ENCODE measurements at regions of chr1 and their contacts with region 1.

Region 1: GRCh38 chr1:150829743-150830142 is 21.7 kb upstream of the CTSK start:
- DNase-seq: no peak
- H3K4me3 ChIP-seq: no peak overlapping the region
- H3K27ac ChIP-seq: no peak overlapping the region
- H3K4me1 ChIP-seq: no peaks in the 10 kb centered on the region
- H3K27me3 ChIP-seq: no peaks in the 10 kb centered on the region
- CTCF ChIP-seq: no peak

Region 2: GRCh38 chr1:150995896-150996295 is 166.2 kb after region 1 on chr1:
- intact Hi-C with region 1: loop called (anchors 10 kb)
- DNase-seq: no peak
- H3K4me3 ChIP-seq: no peak overlapping the region
- H3K27ac ChIP-seq: no peak overlapping the region
- H3K4me1 ChIP-seq: no peaks in the 10 kb centered on the region
- H3K27me3 ChIP-seq: no peaks in the 10 kb centered on the region
- CTCF ChIP-seq: peak; percentile 90